ENCODE measurements at regions of chr9 and their contacts with region 1.

Region 1: GRCh38 chr9:17402309-17402708 is 176.6 kb upstream of the SH3GL2 start:
- DNase-seq: peak; percentile 42
- H3K4me3 ChIP-seq: no peak overlapping the region
- H3K27ac ChIP-seq: no peak overlapping the region
- H3K4me1 ChIP-seq: no peaks in the 10 kb centered on the region
- H3K27me3 ChIP-seq: no peaks in the 10 kb centered on the region
- CTCF ChIP-seq: peak; percentile 30; the same call in 1 of the 2 replicates

Region 2: GRCh38 chr9:17075758-17076485 is 326.4 kb before region 1 on chr9:
- CTCF ChIA-PET with region 1: no interaction called
- POLR2A ChIA-PET with region 1: no interaction called
- intact Hi-C with region 1: loop called (anchors 10 kb)
- DNase-seq: peak; percentile 2
- H3K4me3 ChIP-seq: no peak overlapping the region
- H3K27ac ChIP-seq: no peak overlapping the region
- H3K4me1 ChIP-seq: no peaks in the 10 kb centered on the region
- H3K27me3 ChIP-seq: no peaks in the 10 kb centered on the region
- CTCF ChIP-seq: no peak

Region 3: DNA sequence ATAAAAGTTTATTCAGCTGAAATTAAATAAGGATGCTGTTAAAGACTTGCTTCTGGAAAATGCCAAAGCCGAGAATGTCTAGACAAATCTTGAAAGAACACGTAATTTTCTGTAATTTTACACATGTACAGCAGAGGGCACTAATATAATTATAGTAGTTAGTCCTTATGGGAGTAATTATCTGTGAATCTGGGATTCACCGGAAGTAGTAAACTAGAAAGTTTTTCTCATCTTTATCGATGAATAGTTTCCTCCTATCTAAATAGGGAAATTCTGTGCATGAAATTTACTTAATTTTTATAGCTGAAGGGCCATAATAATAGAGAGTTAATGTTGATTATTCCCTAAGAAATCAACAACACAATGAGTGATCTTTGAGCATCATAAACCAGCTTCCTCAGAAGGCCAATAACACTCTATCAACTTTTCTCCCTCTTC is 285.9 kb before region 1 on chr9:
- CTCF ChIA-PET with region 1: interaction called, 3 read pairs
- POLR2A ChIA-PET with region 1: no interaction called
- intact Hi-C with region 1: loop called (anchors 2 kb)
- DNase-seq: peak; percentile 48
- H3K4me3 ChIP-seq: no peak overlapping the region
- H3K27ac ChIP-seq: no peak overlapping the region
- H3K4me1 ChIP-seq: no peaks in the 10 kb centered on the region
- H3K27me3 ChIP-seq: no peaks in the 10 kb centered on the region
- CTCF ChIP-seq: peak; percentile 53